H1 (cell line): ENCODE measurements at regions of chr3 and their contacts with region 1.

Region 1: GRCh38 chr3:32154205-32154579 is 47.8 kb downstream of the GPD1L start:
- DNase-seq: no peak
- H3K4me3 ChIP-seq: no peak overlapping the region
- H3K27ac ChIP-seq: no peak overlapping the region
- H3K4me1 ChIP-seq: no peaks in the 10 kb centered on the region; a peak in 1 of 7 replicates
- H3K27me3 ChIP-seq: no peaks in the 10 kb centered on the region
- CTCF ChIP-seq: peak; percentile 50 to 71 (median 56)
- EP300 ChIP-seq: no peak
- POLR2A ChIP-seq: no peak
- RAD21 ChIP-seq: peak; percentile 76 to 79

Region 2: DNA sequence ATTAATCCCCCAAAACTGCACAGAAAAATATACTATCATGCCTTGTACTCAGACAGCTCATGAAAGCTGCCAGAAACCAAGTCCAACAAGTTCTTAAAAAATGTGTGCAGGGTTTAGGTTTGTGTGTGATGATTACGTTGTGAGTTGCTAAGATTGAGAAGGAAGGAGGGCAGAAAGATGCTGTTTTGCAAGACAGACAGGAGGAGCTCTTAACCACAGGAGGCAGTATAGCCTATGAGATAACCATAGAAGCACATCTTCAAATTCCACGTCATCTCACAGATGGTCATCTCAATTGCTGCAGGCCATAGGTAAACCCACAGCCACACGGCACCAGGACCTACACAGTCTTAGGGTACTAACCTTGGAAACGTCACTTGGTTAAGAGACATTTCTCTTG is 429.5 kb before region 1 on chr3:
- CTCF ChIA-PET with region 1: interaction called, 11 read pairs
- POLR2A ChIA-PET with region 1: no interaction called
- DNase-seq: no peak
- H3K4me3 ChIP-seq: peak overlapping the region in 1 of 4 experiments; percentile 14; a peak in 1 of 8 replicates
- H3K27ac ChIP-seq: no peak overlapping the region
- H3K4me1 ChIP-seq: peaks cover 0 to 9% (median 2%) of the 10 kb centered on the region in 4 experiments; a peak in 3 of 7 replicates
- H3K27me3 ChIP-seq: no peaks in the 10 kb centered on the region
- CTCF ChIP-seq: peak in 2 of 3 experiments; percentile 12 to 61; a peak in 2 of 4 replicates
- EP300 ChIP-seq: no peak
- POLR2A ChIP-seq: no peak
- RAD21 ChIP-seq: peak; percentile 68 to 70

Region 3: GRCh38 chr3:32120471-32120870 is 33.7 kb before region 1 on chr3:
- CTCF ChIA-PET with region 1: interaction called, 11 read pairs
- POLR2A ChIA-PET with region 1: no interaction called
- DNase-seq: no peak
- H3K4me3 ChIP-seq: no peak overlapping the region
- H3K27ac ChIP-seq: no peak overlapping the region
- H3K4me1 ChIP-seq: 0 out of 7 replicates have a peak, but pooled peaks cover 0 to 2% (median 0%) of the 10 kb centered on the region in 4 experiments
- H3K27me3 ChIP-seq: no peaks in the 10 kb centered on the region
- CTCF ChIP-seq: no peak
- EP300 ChIP-seq: no peak
- POLR2A ChIP-seq: no peak
- RAD21 ChIP-seq: no peak

Region 4: DNA sequence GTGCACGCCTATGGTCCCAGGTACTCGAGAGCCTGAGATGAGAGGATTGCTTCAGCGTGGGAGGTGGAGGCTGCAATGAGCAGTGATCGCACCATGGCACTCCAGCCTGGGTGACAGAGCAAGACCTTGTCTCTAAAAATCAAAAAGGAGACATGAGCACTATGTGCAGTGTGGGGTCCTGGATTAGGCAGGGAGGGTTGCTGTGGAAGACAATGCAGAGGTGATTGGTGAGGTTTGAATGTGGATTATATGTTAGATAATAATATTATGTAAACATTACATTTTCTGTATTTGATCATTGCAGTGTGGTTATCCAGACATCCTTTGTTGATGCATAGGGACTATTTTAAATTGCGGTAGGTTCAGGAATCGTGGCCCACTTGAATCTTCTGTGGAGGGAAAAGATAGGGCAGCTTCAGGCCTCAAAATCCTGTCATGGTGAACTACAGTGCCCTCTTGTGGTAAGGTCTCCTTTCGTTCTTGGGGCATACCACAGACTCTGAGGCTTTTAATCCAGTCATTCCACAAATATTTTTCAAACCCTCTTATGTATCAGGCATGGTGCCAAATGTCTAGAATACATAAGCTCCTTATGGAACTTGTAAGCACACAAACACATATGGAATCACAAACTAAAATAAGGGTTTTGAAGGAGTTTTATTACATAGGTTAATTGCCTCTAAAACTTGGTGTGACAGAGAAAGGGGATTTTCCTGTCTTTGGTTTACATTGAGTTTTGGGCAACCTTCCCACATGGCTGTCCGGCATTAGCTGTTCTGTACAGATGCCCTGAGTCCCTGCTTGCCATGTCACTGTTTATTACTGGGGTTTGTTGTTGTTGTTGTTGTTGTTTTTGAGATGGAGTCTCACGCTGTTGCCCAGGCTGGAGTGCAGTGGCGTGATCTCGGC is 10.1 kb before region 1 on chr3:
- CTCF ChIA-PET with region 1: interaction called, 20 read pairs
- POLR2A ChIA-PET with region 1: no interaction called
- DNase-seq: no peak
- H3K4me3 ChIP-seq: no peak overlapping the region
- H3K27ac ChIP-seq: no peak overlapping the region
- H3K4me1 ChIP-seq: peaks cover 0 to 6% (median 4%) of the 10 kb centered on the region in 4 experiments; a peak in 4 of 7 replicates
- H3K27me3 ChIP-seq: no peaks in the 10 kb centered on the region
- CTCF ChIP-seq: peak; percentile 26 to 81 (median 77)
- EP300 ChIP-seq: no peak
- POLR2A ChIP-seq: no peak
- RAD21 ChIP-seq: peak; percentile 89 to 91